ENCODE measurements at regions of chr18 and their contacts with region 1.

Region 1: DNA sequence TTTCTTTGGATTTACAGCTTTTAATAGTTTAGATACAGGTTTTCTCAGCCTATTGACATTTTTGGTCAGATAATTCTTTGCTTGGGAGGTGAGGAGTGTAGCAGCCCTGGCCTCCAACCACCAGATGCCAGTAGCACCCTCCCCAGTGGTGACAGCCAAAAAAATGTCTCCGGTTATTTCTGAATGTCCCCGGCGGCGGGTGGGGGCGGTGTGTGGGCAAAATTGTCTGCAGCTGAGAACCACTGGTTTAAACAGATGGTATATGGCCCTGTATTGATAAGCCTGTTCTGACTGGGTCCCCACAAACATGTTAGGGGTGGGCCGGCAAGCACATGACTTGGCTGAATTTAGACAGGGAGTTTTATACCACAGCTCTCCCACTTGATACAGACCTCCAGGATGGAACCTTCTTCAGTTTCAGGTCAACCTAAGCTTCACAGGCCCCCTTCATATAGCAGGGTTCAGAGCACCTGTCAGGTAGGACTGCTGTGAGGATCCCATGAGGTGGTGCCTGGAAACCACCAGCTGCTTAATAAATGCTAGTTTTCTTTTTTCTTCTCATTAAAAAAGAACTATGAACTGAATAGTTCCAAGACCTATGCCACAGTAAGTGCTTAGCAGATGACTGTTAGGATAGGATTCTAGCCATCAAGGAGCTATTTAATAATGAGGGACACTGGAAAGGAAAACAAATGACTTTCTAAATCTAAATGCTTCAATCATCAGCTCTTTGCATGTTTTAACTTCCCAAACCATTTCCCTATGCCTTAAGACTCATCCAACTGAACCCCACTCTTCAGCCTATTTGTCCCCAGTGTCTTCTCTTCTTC is 18.1 kb downstream of the LPIN2 start:
- H3K4me3 Mint-ChIP-seq: no peak overlapping the region
- H3K27ac Mint-ChIP-seq: peak overlapping the region; percentile 4
- H3K4me1 Mint-ChIP-seq: peaks cover 54% of the 10 kb centered on the region
- H3K27me3 Mint-ChIP-seq: no peaks in the 10 kb centered on the region

Region 2: GRCh38 chr18:2758309-2758708 is 236.5 kb before region 1 on chr18:
- intact Hi-C with region 1: no loop called
- H3K4me3 Mint-ChIP-seq: no peak overlapping the region
- H3K27ac Mint-ChIP-seq: no peak overlapping the region
- H3K4me1 Mint-ChIP-seq: no peaks in the 10 kb centered on the region
- H3K27me3 Mint-ChIP-seq: no peaks in the 10 kb centered on the region

Region 3: DNA sequence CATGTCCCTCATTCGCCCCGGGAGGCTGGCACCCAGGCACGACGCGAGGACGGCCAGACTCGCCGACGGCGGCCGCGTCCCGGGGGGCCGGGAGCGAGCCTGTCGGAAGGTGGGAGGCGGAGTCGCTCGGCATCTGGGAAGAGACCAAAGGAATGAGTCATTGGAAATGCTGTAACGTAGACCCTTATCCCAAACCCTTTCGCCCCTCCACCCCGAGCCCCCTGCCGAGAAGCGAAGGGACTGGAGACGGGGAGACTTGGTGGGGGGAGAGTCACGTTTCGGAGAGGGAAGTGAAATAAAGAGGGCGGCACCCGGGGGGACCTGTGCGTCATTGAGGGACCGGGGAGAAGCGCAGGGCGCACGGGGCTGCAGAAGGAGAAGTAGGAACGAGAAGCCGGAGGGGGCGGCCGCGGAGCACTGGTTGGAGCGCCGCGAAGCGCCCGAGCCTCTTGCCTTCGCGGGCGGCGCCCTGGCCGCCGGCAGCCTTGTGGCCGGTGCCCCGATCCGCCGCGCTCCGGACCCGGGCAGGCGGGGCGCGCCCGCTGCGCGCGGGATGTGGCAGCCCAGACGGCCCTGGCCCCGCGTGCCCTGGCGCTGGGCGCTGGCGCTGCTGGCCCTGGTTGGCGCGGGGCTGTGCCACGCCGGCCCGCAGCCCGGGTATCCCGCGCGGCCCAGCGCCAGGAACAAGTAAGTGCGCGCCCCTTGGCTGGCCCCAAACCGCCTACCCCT is 148.0 kb before region 1 on chr18 and contains the start of gene EMILIN2:
- intact Hi-C with region 1: no loop called
- H3K4me3 Mint-ChIP-seq: peak within 1 kb of the TSS; percentile 97
- H3K27ac Mint-ChIP-seq: no peak within 1 kb of the TSS
- H3K4me1 Mint-ChIP-seq: peaks cover 76% of the 10 kb centered on the region
- H3K27me3 Mint-ChIP-seq: no peaks in the 10 kb centered on the region

Region 4: GRCh38 chr18:3069671-3070433 is 75.0 kb after region 1 on chr18:
- intact Hi-C with region 1: no loop called
- H3K4me3 Mint-ChIP-seq: no peak overlapping the region
- H3K27ac Mint-ChIP-seq: no peak overlapping the region
- H3K4me1 Mint-ChIP-seq: peaks cover 14% of the 10 kb centered on the region
- H3K27me3 Mint-ChIP-seq: no peaks in the 10 kb centered on the region

Region 5: GRCh38 chr18:3129053-3129864 is 134.4 kb after region 1 on chr18:
- intact Hi-C with region 1: loop called (anchors 10 kb)
- H3K4me3 Mint-ChIP-seq: peak overlapping the region; percentile 64
- H3K27ac Mint-ChIP-seq: peak overlapping the region; percentile 50
- H3K4me1 Mint-ChIP-seq: peaks cover 12% of the 10 kb centered on the region
- H3K27me3 Mint-ChIP-seq: no peaks in the 10 kb centered on the region

Region 6: GRCh38 chr18:3151399-3152264 is 156.8 kb after region 1 on chr18:
- intact Hi-C with region 1: loop called (anchors 10 kb)
- H3K4me3 Mint-ChIP-seq: no peak overlapping the region
- H3K27ac Mint-ChIP-seq: no peak overlapping the region
- H3K4me1 Mint-ChIP-seq: peaks cover 7% of the 10 kb centered on the region
- H3K27me3 Mint-ChIP-seq: no peaks in the 10 kb centered on the region